Adrenal gland (tissue), 19 donors: ENCODE measurements at regions of chr1 and their contacts with region 1.

Region 1: DNA sequence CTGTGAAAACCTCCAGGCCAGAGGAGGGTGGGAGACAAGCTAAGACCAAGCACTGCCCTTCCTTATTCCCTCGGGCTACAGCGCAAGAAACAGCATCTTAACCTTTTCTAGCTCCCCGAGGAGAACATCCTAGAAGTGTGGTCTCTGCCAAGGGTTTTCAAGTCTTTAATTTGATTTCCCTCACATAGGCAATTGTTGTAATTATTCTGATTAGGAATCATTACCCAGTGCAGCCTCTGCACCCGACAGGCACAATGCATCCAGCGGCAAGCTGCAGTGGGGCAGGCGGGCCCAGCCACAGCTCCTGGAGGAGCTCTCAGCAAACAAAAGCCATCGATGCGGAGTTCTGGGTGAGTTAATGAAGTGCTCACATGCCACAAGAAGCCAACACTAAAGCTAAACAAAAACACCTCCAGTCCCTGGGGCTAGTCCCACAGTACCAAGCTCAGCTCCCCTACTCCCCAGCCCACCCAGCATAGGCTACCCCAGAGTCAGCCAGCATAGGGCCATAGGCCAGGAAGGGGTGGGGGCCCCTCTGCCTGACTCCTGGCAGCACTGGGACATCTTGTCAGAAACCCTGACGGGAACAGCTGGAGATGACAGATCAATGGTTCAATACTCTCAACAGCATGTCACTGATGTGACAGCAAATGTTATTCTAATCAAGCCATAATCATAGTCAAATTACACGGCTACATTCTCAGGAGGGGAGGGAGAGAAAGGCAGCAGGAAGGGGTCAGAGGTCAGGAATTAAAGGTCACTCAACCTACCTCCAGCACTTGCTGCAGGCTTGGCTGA is 42.5 kb downstream of the ERI3 start:
- DNase-seq: no peak
- H3K4me3 ChIP-seq: no peak overlapping the region
- H3K27ac ChIP-seq: no peak overlapping the region
- H3K4me1 ChIP-seq: no peaks in the 10 kb centered on the region
- H3K27me3 ChIP-seq: no peaks in the 10 kb centered on the region
- CTCF ChIP-seq: no peak
- POLR2A ChIP-seq: no peak

Region 2: DNA sequence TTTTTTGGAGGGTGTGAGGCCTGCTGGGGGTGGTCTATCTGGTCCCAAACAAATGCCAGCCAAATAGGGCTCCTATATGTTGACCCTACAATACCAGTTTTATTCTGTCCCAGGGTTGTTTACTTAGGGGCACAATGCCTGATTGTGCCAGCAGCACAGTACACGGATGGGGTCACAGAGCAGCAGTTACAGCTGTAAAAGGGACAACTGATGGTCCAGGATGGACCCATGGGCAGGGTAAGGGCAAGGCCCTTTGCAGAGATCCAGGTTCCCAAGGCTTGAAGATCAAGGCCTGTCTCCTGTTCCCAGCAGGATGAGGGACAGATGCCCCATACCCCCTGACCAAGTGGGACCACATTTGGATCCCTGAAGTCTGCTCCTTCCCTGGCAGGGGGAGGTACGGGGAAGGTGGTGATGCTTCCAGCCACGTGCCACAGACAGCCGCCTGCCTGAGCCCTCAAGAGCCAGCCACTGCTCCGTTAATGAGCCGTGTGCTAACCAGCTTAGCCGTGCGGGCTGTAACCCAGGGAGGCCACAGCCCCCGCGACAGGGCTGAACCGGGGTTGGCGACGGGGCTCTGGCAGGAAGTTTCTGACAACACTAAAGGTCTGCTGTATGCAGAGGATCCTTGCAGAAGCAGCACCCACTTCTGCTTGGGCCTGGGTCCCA is 299.5 kb before region 1 on chr1:
- intact Hi-C with region 1: no loop called
- DNase-seq: no peak
- H3K4me3 ChIP-seq: no peak overlapping the region
- H3K27ac ChIP-seq: no peak overlapping the region
- H3K4me1 ChIP-seq: no peaks in the 10 kb centered on the region
- H3K27me3 ChIP-seq: no peaks in the 10 kb centered on the region
- CTCF ChIP-seq: no peak
- POLR2A ChIP-seq: no peak

Region 3: GRCh38 chr1:44347280-44347679 is 34.7 kb after region 1 on chr1:
- intact Hi-C with region 1: loop called in 1 of 2 experiments (anchors 2 kb)
- DNase-seq: no peak
- H3K4me3 ChIP-seq: no peak overlapping the region
- H3K27ac ChIP-seq: peak overlapping the region in 1 of 5 donors; percentile 60
- H3K4me1 ChIP-seq: peaks cover 0 to 3% of the 10 kb centered on the region in 2 donors
- H3K27me3 ChIP-seq: no peaks in the 10 kb centered on the region
- CTCF ChIP-seq: no peak
- POLR2A ChIP-seq: no peak